ENCODE measurements at regions of chr14 and their contacts with region 1.

Region 1: DNA sequence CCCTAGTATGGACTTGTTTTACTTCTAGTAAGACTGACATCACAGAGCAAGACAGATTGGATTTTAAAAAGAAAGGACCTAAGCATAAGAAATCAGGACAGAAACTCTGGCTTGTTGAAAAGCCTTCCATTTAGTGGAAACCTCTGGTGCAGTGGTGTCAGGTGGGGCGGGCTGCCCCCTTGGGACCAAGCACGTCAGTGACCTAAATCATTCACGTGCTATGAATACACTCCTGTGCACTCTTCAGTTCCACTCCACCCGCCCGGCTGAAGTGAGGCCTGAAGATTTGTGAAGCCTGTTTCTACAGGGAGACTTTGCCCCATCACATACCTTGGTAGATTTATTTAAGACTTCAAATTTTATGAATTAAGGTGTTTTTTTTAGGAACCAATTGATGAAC is 58.2 kb upstream of the STRN3 start:
- DNase-seq: no peak
- H3K4me3 Mint-ChIP-seq: no peak overlapping the region
- H3K27ac Mint-ChIP-seq: no peak overlapping the region
- H3K4me1 Mint-ChIP-seq: no peaks in the 10 kb centered on the region
- H3K27me3 Mint-ChIP-seq: no peaks in the 10 kb centered on the region

Region 2: DNA sequence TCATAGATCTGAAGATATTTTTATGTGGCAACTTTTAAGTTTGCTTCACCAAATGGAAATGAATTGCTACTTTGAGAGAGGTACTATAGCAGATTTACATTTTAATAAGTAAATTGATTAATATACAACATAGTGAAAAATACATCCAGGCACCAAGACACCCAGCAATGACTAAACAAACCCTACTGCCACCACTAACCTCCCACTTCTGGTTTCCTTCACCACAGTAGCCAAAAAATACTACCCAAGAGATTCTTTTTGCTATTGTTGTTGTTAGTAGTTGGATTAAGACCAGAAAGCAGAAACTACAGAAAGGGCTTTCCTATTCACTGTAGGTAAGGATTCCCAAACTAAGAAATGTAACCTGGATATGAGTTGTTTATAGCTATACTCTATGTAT is 155.9 kb before region 1 on chr14:
- intact Hi-C with region 1: loop called (anchors 2 kb)
- DNase-seq: no peak
- H3K4me3 Mint-ChIP-seq: no peak overlapping the region
- H3K27ac Mint-ChIP-seq: no peak overlapping the region
- H3K4me1 Mint-ChIP-seq: peaks cover 15% of the 10 kb centered on the region
- H3K27me3 Mint-ChIP-seq: no peaks in the 10 kb centered on the region

Region 3: GRCh38 chr14:30982533-30982932 is 101.9 kb before region 1 on chr14:
- intact Hi-C with region 1: loop called (anchors 1 kb)
- DNase-seq: no peak
- H3K4me3 Mint-ChIP-seq: no peak overlapping the region
- H3K27ac Mint-ChIP-seq: no peak overlapping the region
- H3K4me1 Mint-ChIP-seq: no peaks in the 10 kb centered on the region
- H3K27me3 Mint-ChIP-seq: no peaks in the 10 kb centered on the region

Measured in activated T-helper 1 cell treated with anti-CD3 and anti-CD28 coated beads, Interleukin-12 subunit alpha, Interleukin-12 subunit beta, Interleukin-2, Interleukin-4 antibody, amounts not matched to agents 30 ng/mL and 10 ng/mL and 1 ng/mL, durations not matched to agents 14 hours and 24 hours and 36 hours (primary cell).